Right cardiac atrium (tissue), 5 donors: ENCODE measurements at regions of chr1 and their contacts with region 1.

Region 1: DNA sequence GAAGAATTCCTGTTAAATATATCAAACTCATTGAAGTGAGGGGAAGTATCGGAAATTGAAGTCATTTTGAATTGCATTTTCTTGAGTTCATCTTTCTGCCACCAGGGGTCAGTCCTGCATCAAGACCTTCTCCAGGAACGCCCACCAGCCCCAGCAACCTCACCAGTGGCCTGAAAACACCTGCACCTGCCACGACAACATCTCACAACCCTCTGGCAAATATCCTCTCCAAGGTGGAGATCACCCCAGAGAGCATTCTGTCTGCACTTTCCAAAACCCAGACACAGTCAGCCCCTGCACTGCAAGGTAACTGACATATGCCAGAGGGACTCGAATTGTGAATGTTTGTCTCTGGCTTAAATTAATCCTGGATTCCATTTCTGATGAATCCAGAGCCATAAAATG is 22.8 kb upstream of the TARS2 start:
- DNase-seq: peak in 2 of 3 donors; percentile 37 to 64
- ATAC-seq: peak; percentile 63 to 64
- H3K4me3 ChIP-seq: no peak overlapping the region
- H3K27ac ChIP-seq: no peak overlapping the region
- H3K4me1 ChIP-seq: no peaks in the 10 kb centered on the region
- H3K27me3 ChIP-seq: no peaks in the 10 kb centered on the region

Region 2: GRCh38 chr1:150352866-150353265 is 111.6 kb before region 1 on chr1:
- intact Hi-C with region 1: no loop called
- DNase-seq: no peak
- ATAC-seq: peak in 1 of 2 donors; percentile 72
- H3K4me3 ChIP-seq: no peak overlapping the region
- H3K27ac ChIP-seq: no peak overlapping the region
- H3K4me1 ChIP-seq: no peaks in the 10 kb centered on the region
- H3K27me3 ChIP-seq: no peaks in the 10 kb centered on the region

Region 3: GRCh38 chr1:150532868-150533302 is 68.5 kb after region 1 on chr1:
- intact Hi-C with region 1: loop called in 2 of 4 experiments (anchors 5 kb)
- DNase-seq: peak in 2 of 3 donors; percentile 63 to 78
- ATAC-seq: peak; percentile 11 to 21
- H3K4me3 ChIP-seq: no peak overlapping the region
- H3K27ac ChIP-seq: peak overlapping the region; percentile 72
- H3K4me1 ChIP-seq: peaks cover 3% of the 10 kb centered on the region
- H3K27me3 ChIP-seq: no peaks in the 10 kb centered on the region